ENCODE measurements at regions of chr9 and their contacts with region 1.

Region 1: DNA sequence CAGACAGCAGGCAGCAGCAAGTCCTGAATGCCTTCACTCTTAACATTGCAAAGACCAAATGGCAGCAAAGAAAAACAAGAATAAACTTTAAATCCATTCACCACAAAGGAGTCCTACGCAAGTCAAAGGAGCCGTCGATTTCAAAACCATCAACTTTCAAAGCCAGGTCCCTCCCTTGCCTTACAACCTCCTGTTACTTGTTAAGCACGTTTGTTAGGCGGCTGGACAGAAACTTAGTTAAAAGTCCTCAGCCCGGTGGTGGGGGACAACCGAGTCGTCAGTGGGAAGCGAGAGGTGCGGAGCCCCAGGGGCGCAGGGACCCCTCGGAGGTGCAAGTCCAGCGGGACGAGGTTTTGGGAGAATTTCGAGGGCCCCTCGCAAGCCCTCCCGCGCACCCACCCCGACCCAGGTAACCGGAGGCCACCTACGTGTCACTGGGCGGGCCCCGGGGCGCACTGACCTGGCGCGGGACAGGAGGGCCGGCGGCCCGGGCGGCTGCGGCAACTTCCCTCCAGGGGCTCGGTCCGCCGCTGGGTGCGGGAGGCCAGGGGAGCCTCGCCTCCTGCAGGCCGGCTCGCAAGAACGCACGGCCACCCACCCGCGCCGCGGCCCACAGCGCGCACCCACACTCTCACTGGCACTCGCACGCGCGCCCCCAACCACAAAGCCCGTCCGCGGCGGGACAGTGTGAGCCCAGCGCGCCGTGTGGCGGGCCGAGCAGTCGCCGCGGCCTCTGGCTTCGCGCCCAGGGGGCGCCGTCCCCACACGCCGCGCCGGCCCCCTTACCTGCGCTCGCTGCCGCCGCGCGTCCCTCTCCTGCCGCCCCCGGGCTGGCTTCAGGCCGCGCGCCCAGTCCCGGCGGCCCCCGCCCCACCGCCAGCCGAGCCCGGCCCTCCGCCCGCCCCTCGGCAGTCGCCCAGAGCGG is 627 bp downstream of the LPAR1 start:
- DNase-seq: no peak
- ATAC-seq: peak; percentile 62
- H3K4me3 ChIP-seq: peak overlapping the region; percentile 53; the same call in 1 of the 2 replicates
- H3K27ac ChIP-seq: no peak overlapping the region
- H3K4me1 ChIP-seq: no peaks in the 10 kb centered on the region
- H3K27me3 ChIP-seq: peaks cover 0 to 10% of the 10 kb centered on the region in 2 experiments; a peak in 1 of 4 replicates
- CTCF ChIP-seq: peak in 2 of 3 experiments; percentile 40 to 54; a peak in 3 of 6 replicates
- EP300 ChIP-seq: no peak
- POLR2A ChIP-seq: no peak
- RAD21 ChIP-seq: peak; percentile 65

Region 2: DNA sequence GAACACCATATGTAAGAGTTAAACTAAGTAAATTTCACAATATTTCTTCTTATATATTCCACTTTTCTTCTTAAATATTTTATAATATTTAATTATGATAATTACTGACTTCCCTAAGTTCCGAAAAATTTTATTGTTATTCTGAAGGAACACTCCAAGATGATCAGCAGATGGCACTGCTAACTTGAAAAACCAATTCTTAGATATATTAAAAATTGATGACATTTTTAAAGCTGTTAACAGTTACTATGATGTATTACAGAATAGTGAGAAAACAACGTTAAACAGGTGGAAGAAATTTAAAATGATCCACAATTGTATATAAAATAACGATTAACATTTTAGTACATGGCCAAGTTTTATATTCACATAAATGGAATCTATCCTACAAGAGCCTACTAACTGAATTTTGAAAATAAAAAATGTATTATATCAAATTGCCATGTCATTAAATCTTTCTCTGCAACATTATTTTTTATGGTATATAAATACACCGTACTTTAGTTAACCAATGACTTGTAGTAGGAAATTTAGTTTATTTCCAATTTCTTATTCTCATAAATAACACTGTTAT is 399.2 kb before region 1 on chr9:
- CTCF ChIA-PET with region 1: interaction called, 18 read pairs
- POLR2A ChIA-PET with region 1: interaction called, 3 read pairs
- RAD21 ChIA-PET with region 1: interaction called, 68 read pairs
- SMC1A ChIA-PET with region 1: interaction called, 98 read pairs
- in situ Hi-C with region 1: no loop called
- intact Hi-C with region 1: loop called (anchors 2 kb)
- DNase-seq: no peak
- ATAC-seq: peak; percentile 43; the same call in 1 of the 3 replicates
- H3K4me3 ChIP-seq: no peak overlapping the region
- H3K27ac ChIP-seq: no peak overlapping the region
- H3K4me1 ChIP-seq: no peaks in the 10 kb centered on the region
- H3K27me3 ChIP-seq: no peaks in the 10 kb centered on the region
- CTCF ChIP-seq: peak in 2 of 3 experiments; percentile 11 to 21; a peak in 3 of 6 replicates
- EP300 ChIP-seq: no peak
- POLR2A ChIP-seq: no peak
- RAD21 ChIP-seq: peak; percentile 81

Region 3: GRCh38 chr9:110933350-110934001 is 104.2 kb before region 1 on chr9:
- CTCF ChIA-PET with region 1: interaction called, 37 read pairs
- POLR2A ChIA-PET with region 1: no interaction called
- RAD21 ChIA-PET with region 1: interaction called, 46 read pairs
- SMC1A ChIA-PET with region 1: interaction called, 20 read pairs
- in situ Hi-C with region 1: no loop called
- intact Hi-C with region 1: no loop called
- DNase-seq: peak; percentile 41
- ATAC-seq: peak; percentile 80
- H3K4me3 ChIP-seq: peak overlapping the region; percentile 5; the same call in 1 of the 2 replicates
- H3K27ac ChIP-seq: peak overlapping the region; percentile 47
- H3K4me1 ChIP-seq: peaks cover 10% of the 10 kb centered on the region
- H3K27me3 ChIP-seq: no peaks in the 10 kb centered on the region
- CTCF ChIP-seq: no peak
- EP300 ChIP-seq: 0 out of 4 replicates have a peak, but pooled peaks of 1 of the 2 experiments have one; percentile 15
- POLR2A ChIP-seq: no peak
- RAD21 ChIP-seq: no peak

Region 4: GRCh38 chr9:110996436-110997220 is 41.0 kb before region 1 on chr9:
- CTCF ChIA-PET with region 1: interaction called, 8 read pairs
- POLR2A ChIA-PET with region 1: interaction called, 9 read pairs
- RAD21 ChIA-PET with region 1: interaction called, 27 read pairs
- SMC1A ChIA-PET with region 1: interaction called, 18 read pairs
- in situ Hi-C with region 1: no loop called
- intact Hi-C with region 1: no loop called
- DNase-seq: no peak
- ATAC-seq: no peak
- H3K4me3 ChIP-seq: no peak overlapping the region
- H3K27ac ChIP-seq: no peak overlapping the region
- H3K4me1 ChIP-seq: peaks cover 6% of the 10 kb centered on the region
- H3K27me3 ChIP-seq: no peaks in the 10 kb centered on the region; a peak in 1 of 4 replicates
- CTCF ChIP-seq: no peak
- EP300 ChIP-seq: no peak
- POLR2A ChIP-seq: no peak
- RAD21 ChIP-seq: no peak

Region 5: GRCh38 chr9:111063332-111063731 is 25.7 kb after region 1 on chr9:
- CTCF ChIA-PET with region 1: interaction called, 12 read pairs
- POLR2A ChIA-PET with region 1: interaction called, 6 read pairs
- RAD21 ChIA-PET with region 1: interaction called, 56 read pairs
- SMC1A ChIA-PET with region 1: interaction called, 73 read pairs
- in situ Hi-C with region 1: no loop called
- intact Hi-C with region 1: no loop called
- DNase-seq: no peak
- ATAC-seq: no peak
- H3K4me3 ChIP-seq: no peak overlapping the region
- H3K27ac ChIP-seq: no peak overlapping the region
- H3K4me1 ChIP-seq: peaks cover 6% of the 10 kb centered on the region
- H3K27me3 ChIP-seq: no peaks in the 10 kb centered on the region
- CTCF ChIP-seq: no peak
- EP300 ChIP-seq: no peak
- POLR2A ChIP-seq: no peak
- RAD21 ChIP-seq: no peak

Region 6: GRCh38 chr9:111161015-111161415 is 123.4 kb after region 1 on chr9:
- CTCF ChIA-PET with region 1: interaction called, 3 read pairs
- POLR2A ChIA-PET with region 1: no interaction called
- RAD21 ChIA-PET with region 1: interaction called, 5 read pairs
- SMC1A ChIA-PET with region 1: interaction called, 13 read pairs
- in situ Hi-C with region 1: no loop called
- intact Hi-C with region 1: no loop called
- DNase-seq: no peak
- ATAC-seq: peak; percentile 67
- H3K4me3 ChIP-seq: no peak overlapping the region
- H3K27ac ChIP-seq: no peak overlapping the region
- H3K4me1 ChIP-seq: no peaks in the 10 kb centered on the region
- H3K27me3 ChIP-seq: no peaks in the 10 kb centered on the region
- CTCF ChIP-seq: no peak
- EP300 ChIP-seq: no peak
- POLR2A ChIP-seq: no peak
- RAD21 ChIP-seq: no peak

Region 7: GRCh38 chr9:111298731-111299598 is 261.3 kb after region 1 on chr9:
- CTCF ChIA-PET with region 1: interaction called, 50 read pairs
- POLR2A ChIA-PET with region 1: no interaction called
- RAD21 ChIA-PET with region 1: interaction called, 37 read pairs
- SMC1A ChIA-PET with region 1: interaction called, 59 read pairs
- in situ Hi-C with region 1: loop called (anchors 5 kb)
- intact Hi-C with region 1: loop called (anchors 1 kb)
- DNase-seq: peak; percentile 37
- ATAC-seq: peak; percentile 87
- H3K4me3 ChIP-seq: no peak overlapping the region
- H3K27ac ChIP-seq: no peak overlapping the region
- H3K4me1 ChIP-seq: no peaks in the 10 kb centered on the region
- H3K27me3 ChIP-seq: no peaks in the 10 kb centered on the region
- CTCF ChIP-seq: peak; percentile 56 to 87 (median 65)
- EP300 ChIP-seq: no peak
- POLR2A ChIP-seq: no peak
- RAD21 ChIP-seq: peak; percentile 99

Measured in GM12878 (cell line).